ENCODE measurements at regions of chr6 and their contacts with region 1.

Region 1: DNA sequence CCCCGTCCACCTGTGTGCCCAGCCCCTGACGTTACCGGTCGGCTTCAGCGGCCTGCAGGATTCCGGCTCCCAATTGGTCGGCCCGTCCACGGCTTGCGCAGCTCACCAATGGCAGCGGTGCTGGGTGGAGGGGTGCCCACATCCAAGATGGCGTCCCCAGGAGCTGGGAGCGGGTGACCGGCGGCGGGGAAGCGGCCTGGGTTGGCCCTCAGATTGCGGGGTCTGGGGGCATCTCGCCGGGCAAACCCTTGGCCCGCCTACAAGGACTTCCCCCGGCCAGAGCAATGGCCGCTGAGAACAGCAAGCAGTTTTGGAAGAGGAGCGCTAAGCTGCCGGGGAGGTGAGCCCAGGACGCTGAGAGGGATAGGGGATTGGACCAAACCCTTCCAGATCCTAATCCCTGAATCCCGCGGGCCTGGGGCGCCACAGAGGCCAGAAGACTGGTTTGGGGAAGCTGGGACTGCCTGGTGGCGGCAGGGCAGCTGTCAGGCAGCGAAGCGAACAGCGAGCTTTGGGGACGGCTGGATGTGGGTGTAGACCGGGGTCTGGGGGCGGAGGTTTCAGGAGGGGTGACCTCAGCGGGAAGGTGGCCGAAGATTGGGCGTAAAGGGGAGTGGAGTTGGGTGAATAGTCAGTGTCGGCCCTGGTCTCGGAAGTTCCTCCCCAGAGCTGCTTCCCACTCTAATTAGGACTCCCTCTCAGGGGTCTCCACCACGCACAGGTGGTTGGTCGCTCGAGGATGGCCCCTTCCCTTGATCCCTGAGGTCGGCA is at the starts of genes TBC1D22B and TMEM217:
- DNase-seq: peak; percentile 94
- ATAC-seq: peak; percentile 100
- H3K4me3 Mint-ChIP-seq: peak within 1 kb of the TSS; percentile 94
- H3K27ac Mint-ChIP-seq: peak within 1 kb of the TSS; percentile 91
- H3K4me1 Mint-ChIP-seq: peaks cover 41% of the 10 kb centered on the region
- H3K27me3 Mint-ChIP-seq: peaks cover 2% of the 10 kb centered on the region
- total RNA-seq, gene TBC1D22B: 13.8 to 14.7 TPM
- total RNA-seq, gene TMEM217: 1.4 to 2.0 TPM

Region 2: GRCh38 chr6:37222125-37222967 is 35.5 kb before region 1 on chr6:
- POLR2A ChIA-PET with region 1: interaction called, 13 read pairs
- DNase-seq: peak; percentile 85
- ATAC-seq: peak; percentile 97
- H3K4me3 Mint-ChIP-seq: peak overlapping the region; percentile 77
- H3K27ac Mint-ChIP-seq: peak overlapping the region; percentile 57
- H3K4me1 Mint-ChIP-seq: peaks cover 25% of the 10 kb centered on the region
- H3K27me3 Mint-ChIP-seq: no peaks in the 10 kb centered on the region

Region 3: GRCh38 chr6:37232430-37233017 is 25.3 kb before region 1 on chr6:
- POLR2A ChIA-PET with region 1: no interaction called
- DNase-seq: no peak
- ATAC-seq: no peak
- H3K4me3 Mint-ChIP-seq: no peak overlapping the region
- H3K27ac Mint-ChIP-seq: no peak overlapping the region
- H3K4me1 Mint-ChIP-seq: no peaks in the 10 kb centered on the region
- H3K27me3 Mint-ChIP-seq: peaks cover 5% of the 10 kb centered on the region

Region 4: DNA sequence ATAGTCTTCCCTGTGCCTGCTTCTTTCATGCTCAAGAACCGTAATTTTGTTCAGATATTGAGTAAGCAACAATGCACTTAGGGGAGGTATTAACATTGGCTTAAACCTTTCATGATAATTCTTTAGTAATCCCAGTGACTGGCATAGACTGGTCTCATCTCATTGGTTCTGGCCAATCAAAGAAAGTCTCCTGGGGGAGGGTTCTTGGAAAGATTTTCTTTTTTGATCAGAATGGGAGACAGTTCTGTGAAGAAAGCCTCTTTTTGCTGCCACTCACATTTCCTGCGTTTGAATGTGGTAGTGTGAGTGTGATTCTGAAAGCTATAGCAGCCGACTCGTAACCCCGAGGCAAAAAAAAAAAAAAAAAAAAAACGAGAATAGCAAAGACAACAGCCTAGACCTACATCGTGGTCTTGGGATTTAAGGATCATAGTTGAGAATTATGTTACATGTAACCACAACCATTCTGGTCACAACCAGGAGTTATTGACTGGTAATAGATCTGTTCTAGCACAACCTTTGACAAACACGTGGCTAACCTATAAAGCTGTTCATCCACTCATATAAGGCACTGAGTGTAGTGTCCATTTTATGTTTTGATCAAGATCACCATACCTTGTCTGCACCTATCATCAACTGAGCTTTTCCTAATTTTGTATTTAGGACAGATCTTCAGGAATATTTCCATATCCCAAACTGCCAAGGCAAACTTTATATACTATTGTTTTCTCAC is 15.2 kb after region 1 on chr6:
- POLR2A ChIA-PET with region 1: interaction called, 15 read pairs
- DNase-seq: no peak
- ATAC-seq: peak; percentile 82
- H3K4me3 Mint-ChIP-seq: peak overlapping the region; percentile 72
- H3K27ac Mint-ChIP-seq: peak overlapping the region; percentile 86
- H3K4me1 Mint-ChIP-seq: peaks cover 64% of the 10 kb centered on the region
- H3K27me3 Mint-ChIP-seq: no peaks in the 10 kb centered on the region

Region 5: GRCh38 chr6:37353761-37354525 is 96.1 kb after region 1 on chr6 and contains the start of gene RNF8:
- POLR2A ChIA-PET with region 1: no interaction called
- DNase-seq: peak; percentile 91
- ATAC-seq: peak; percentile 99
- H3K4me3 Mint-ChIP-seq: peak within 1 kb of the TSS; percentile 95
- H3K27ac Mint-ChIP-seq: peak within 1 kb of the TSS; percentile 90
- H3K4me1 Mint-ChIP-seq: peaks cover 22% of the 10 kb centered on the region
- H3K27me3 Mint-ChIP-seq: peaks cover 6% of the 10 kb centered on the region
- total RNA-seq, gene RNF8: 22.0 to 24.8 TPM

Measured in activated naive CD8-positive, alpha-beta T cell treated with anti-CD3 and anti-CD28 coated beads, Interleukin-2, amount 10 ng/mL, durations not matched to agents 7 days and 5 days (primary cell).